AG04450 (cell line): ENCODE measurements at regions of chr13 and their contacts with region 1.

Region 1: DNA sequence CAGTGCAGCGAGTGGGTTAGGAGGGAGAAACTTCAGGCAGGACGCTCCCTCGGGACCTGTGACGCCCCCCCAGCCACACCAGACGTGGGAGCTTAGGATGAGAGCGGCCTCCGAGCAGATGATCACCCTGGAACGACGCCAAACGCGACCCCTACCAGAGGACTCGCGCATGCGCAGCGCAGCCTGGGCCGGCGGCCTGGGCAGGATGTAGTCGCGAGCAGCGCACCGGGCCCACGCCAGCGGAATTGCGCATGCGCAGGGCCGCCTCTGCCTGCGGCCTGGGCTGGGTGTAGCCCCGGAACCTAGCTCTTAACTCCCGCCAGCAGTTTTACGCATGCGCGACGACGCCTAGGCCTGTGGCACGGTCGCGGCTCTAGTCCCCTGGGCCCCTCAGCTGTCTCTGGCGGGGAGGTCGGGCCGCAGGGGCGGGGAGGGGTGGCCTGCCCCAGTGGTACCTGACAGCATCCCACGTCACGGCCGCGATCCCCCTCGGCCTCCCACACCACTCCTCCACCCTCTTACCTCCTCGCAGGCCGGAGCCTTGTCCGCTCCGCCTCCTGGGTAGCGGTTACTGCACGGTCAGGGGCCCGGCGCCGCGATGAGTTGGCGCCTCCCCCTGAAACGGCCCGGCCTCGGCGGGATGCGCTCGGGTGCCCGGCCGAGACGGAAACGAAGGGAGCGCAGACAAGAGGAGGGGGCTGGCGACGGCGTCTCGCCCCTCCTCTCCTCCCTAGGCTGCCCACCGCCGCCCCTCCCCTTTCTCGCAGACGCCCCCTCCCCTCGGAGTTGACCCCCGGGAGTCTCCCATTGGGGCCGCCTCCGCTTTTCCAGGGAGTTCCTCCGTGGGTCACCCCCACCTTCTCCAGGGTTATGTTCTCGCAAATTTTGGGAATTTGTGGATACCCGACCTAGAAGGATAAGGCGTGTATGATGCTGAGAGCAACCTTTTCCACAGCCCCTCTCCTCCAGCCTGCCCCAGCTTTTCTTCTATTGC is at the start of gene RCBTB2:
- DNase-seq: peak; percentile 92
- H3K4me3 ChIP-seq: peak within 1 kb of the TSS; percentile 84
- H3K27ac ChIP-seq: peak within 1 kb of the TSS; percentile 82
- H3K27me3 ChIP-seq: no peaks in the 10 kb centered on the region
- CTCF ChIP-seq: no peak
- polyA plus RNA-seq, gene RCBTB2: 8.6 and 10.9 TPM in 2 replicates

Region 2: DNA sequence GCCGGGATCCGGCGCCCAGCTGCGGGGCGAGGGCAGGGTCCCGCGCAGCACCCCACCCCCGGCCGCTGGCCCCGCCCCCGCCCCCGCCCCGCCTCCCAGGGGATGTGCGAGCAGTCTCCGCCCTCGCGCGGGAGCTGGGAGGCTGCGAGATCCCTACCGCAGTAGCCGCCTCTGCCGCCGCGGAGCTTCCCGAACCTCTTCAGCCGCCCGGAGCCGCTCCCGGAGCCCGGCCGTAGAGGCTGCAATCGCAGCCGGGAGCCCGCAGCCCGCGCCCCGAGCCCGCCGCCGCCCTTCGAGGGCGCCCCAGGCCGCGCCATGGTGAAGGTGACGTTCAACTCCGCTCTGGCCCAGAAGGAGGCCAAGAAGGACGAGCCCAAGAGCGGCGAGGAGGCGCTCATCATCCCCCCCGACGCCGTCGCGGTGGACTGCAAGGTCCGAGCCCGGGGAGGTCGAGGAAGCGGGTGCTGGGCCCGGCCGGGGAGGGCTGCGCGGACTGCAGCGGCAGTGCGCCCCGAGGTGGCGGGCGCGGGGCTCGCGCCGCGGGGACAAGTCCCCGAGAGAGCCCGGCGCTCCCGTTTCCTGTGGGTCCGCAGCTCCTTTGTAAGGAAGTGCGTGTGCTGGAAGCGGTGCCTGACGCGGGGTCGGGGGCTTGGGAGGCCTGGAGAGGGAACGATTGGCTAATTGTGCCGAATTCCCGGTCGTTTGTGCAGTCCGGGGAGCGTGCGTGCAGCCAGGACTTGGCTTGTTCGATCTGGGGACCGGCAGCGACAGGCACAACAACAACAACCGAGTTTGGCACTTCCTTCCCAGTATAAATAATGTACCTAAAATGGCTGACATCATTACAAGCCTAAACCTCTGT is 299.5 kb before region 1 on chr13 and contains the start of gene ITM2B:
- CTCF ChIA-PET with region 1: no interaction called
- POLR2A ChIA-PET with region 1: no interaction called
- DNase-seq: no peak
- H3K4me3 ChIP-seq: peak within 1 kb of the TSS; percentile 98
- H3K27ac ChIP-seq: peak within 1 kb of the TSS; percentile 62
- H3K27me3 ChIP-seq: peaks cover 1% of the 10 kb centered on the region
- CTCF ChIP-seq: peak; percentile 22; the same call in 1 of the 2 replicates
- polyA plus RNA-seq, gene ITM2B: 341 and 417 TPM in 2 replicates

Region 3: GRCh38 chr13:48478391-48478790 is 54.4 kb before region 1 on chr13:
- CTCF ChIA-PET with region 1: no interaction called
- POLR2A ChIA-PET with region 1: no interaction called
- DNase-seq: no peak
- H3K4me3 ChIP-seq: no peak overlapping the region
- H3K27ac ChIP-seq: no peak overlapping the region
- H3K27me3 ChIP-seq: no peaks in the 10 kb centered on the region
- CTCF ChIP-seq: no peak

Region 4: GRCh38 chr13:48500652-48501197 is 32.1 kb before region 1 on chr13:
- CTCF ChIA-PET with region 1: no interaction called
- POLR2A ChIA-PET with region 1: interaction called, 11 read pairs
- DNase-seq: peak; percentile 81
- H3K4me3 ChIP-seq: no peak overlapping the region
- H3K27ac ChIP-seq: peak overlapping the region; percentile 65
- H3K27me3 ChIP-seq: no peaks in the 10 kb centered on the region
- CTCF ChIP-seq: no peak

Region 5: GRCh38 chr13:48571126-48571913 is 38.5 kb after region 1 on chr13:
- CTCF ChIA-PET with region 1: no interaction called
- POLR2A ChIA-PET with region 1: interaction called, 11 read pairs
- DNase-seq: peak; percentile 56
- H3K4me3 ChIP-seq: peak overlapping the region; percentile 11; the same call in 1 of the 2 replicates
- H3K27ac ChIP-seq: peak overlapping the region; percentile 69
- H3K27me3 ChIP-seq: peaks cover 2% of the 10 kb centered on the region
- CTCF ChIP-seq: no peak

Region 6: GRCh38 chr13:48675247-48675646 is 142.4 kb after region 1 on chr13:
- CTCF ChIA-PET with region 1: no interaction called
- POLR2A ChIA-PET with region 1: no interaction called
- DNase-seq: no peak
- H3K4me3 ChIP-seq: no peak overlapping the region
- H3K27ac ChIP-seq: no peak overlapping the region
- H3K27me3 ChIP-seq: peaks cover 7% of the 10 kb centered on the region
- CTCF ChIP-seq: no peak